ENCODE measurements at regions of chr4 and their contacts with region 1.

Region 1: DNA sequence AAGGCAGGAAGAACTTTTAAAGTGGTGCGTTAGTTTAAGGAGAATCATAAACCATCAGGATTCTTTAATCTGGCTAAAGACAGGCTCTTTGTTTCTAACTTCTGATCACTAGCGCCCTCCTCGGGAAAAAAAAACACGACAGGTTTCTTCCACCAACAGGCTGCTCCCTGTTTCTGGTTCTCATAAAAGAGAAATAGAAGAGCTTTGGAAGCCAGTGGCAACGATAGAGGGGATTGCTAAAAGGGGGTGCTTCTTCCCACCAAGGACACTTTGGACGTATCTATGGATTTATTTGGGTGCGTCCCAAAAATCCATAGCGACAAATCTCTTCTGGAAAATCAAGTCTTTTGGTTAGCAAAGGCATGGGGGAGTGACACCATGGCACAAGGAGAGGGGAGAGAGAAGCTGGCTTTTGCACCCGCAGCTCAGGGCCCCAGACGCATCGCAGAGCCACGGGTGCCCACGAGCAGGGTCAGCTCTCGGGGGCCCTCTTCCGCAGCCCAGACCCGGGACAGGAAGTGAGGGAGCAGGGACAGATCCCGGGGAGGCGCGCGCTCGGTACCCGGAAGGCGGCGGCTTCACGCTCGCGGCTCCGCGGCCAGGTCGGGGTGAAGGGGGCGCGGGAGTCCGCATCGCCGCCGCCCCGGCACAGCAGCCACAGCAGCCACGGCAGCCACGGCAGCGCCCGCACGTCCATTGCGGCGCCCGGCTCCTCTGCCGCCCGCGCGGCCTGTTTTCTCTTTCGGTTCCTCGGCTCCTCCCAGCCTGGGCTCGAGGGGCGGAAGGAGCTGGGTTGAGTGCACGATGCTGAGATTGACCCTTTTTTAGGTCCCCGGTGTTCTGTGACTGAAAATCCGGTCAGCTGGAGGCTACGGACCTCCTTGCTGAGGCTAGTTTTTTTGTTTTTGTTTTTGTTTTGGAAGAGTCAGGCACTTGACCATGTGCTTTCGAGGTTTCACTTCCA is at the start of gene CTSO:
- DNase-seq: peak; percentile 80 to 83
- H3K4me3 ChIP-seq: peak within 1 kb of the TSS; percentile 92
- H3K27ac ChIP-seq: peak within 1 kb of the TSS; percentile 94 to 100
- H3K4me1 ChIP-seq: peaks cover 0 to 13% (median 5%) of the 10 kb centered on the region in 4 donors
- H3K27me3 ChIP-seq: no peaks in the 10 kb centered on the region
- CTCF ChIP-seq: peak; percentile 70

Region 2: DNA sequence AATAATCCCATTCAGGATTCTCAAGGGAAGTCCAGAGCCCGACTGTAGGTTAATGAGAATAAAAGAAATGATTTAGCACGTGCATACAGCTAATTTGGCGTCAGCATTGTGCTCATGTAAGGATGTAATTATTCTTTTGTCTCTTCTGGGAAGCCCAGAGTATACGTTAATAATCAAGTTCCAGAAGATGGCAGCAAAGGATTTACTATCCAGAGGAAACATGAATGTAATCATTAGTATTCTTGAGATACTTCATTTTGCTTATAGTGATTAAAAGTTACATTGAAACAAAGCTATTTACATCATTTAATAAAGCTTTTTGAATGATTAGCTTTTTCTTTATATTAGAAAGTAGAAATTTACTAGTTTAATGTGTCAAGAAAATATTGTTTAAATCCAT is 549.5 kb before region 1 on chr4:
- intact Hi-C with region 1: loop called (anchors 10 kb)
- DNase-seq: no peak
- H3K4me3 ChIP-seq: no peak overlapping the region
- H3K27ac ChIP-seq: no peak overlapping the region
- H3K4me1 ChIP-seq: peaks cover 0 to 21% (median 3%) of the 10 kb centered on the region in 4 donors
- H3K27me3 ChIP-seq: no peaks in the 10 kb centered on the region
- CTCF ChIP-seq: peak; percentile 40 to 43

Region 3: GRCh38 chr4:155442267-155443105 is 510.9 kb before region 1 on chr4:
- intact Hi-C with region 1: loop called (anchors 5 kb)
- DNase-seq: peak; percentile 87 to 88
- H3K4me3 ChIP-seq: peak overlapping the region; percentile 23 to 28
- H3K27ac ChIP-seq: peak overlapping the region; percentile 49 to 55
- H3K4me1 ChIP-seq: peaks cover 0 to 12% (median 4%) of the 10 kb centered on the region in 4 donors
- H3K27me3 ChIP-seq: no peaks in the 10 kb centered on the region
- CTCF ChIP-seq: peak; percentile 88 to 95

Region 4: GRCh38 chr4:155809835-155810234 is 143.6 kb before region 1 on chr4:
- intact Hi-C with region 1: loop called (anchors 5 kb)
- DNase-seq: no peak
- H3K4me3 ChIP-seq: no peak overlapping the region
- H3K27ac ChIP-seq: no peak overlapping the region
- H3K4me1 ChIP-seq: peaks cover 0 to 20% (median 3%) of the 10 kb centered on the region in 4 donors
- H3K27me3 ChIP-seq: no peaks in the 10 kb centered on the region
- CTCF ChIP-seq: peak; percentile 62 to 70

Region 5: GRCh38 chr4:155822572-155822971 is 130.9 kb before region 1 on chr4:
- intact Hi-C with region 1: no loop called
- DNase-seq: no peak
- H3K4me3 ChIP-seq: no peak overlapping the region
- H3K27ac ChIP-seq: no peak overlapping the region
- H3K4me1 ChIP-seq: peaks cover 0 to 9% (median 4%) of the 10 kb centered on the region in 4 donors
- H3K27me3 ChIP-seq: no peaks in the 10 kb centered on the region
- CTCF ChIP-seq: no peak

Measured in tibial artery (tissue), 4 donors.